ENCODE measurements at regions of chr1 and their contacts with region 1.

Region 1: DNA sequence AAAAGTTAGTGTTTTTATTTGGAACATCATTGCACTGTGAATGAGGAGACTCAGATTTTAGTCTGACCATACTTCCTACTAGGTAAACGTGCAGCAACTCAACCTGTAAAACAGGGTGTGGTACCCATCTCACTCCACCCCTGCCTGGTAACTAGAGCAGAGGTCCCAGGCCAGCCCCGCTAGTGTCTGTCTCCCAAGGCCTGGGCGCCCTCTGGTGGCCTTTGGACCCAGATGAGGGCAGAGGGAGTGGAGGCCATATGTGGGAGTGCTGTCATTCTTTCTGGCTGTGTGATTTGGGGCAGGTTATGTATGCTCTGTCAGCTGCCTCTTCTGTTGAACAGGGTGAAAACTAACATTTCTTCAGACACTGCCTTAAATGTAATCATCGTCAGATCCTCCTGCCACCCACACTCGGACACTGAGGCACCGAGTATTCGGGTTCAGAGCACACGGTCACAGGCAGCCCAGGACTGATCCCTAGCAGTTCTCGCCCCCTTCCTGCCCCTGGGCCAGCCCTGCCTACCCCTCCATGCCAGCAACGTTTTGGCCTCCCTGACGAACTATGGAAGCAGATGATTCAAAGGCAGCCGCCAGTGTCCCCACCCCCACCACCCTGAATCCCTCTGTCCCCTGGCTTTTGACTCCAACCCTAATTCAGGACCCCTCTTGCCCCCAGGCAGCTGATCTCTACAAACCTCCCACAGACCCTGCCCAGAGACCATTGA is 76.0 kb downstream of the CD247 start:
- DNase-seq: peak; percentile 92
- H3K4me3 ChIP-seq: no peak overlapping the region
- H3K27ac ChIP-seq: no peak overlapping the region
- H3K4me1 ChIP-seq: peaks cover 29% of the 10 kb centered on the region
- CTCF ChIP-seq: peak; percentile 96

Region 2: GRCh38 chr1:167066333-167067122 is 375.8 kb before region 1 on chr1:
- CTCF ChIA-PET with region 1: no interaction called
- POLR2A ChIA-PET with region 1: interaction called, 3 read pairs
- intact Hi-C with region 1: loop called (anchors 1 kb)
- DNase-seq: peak; percentile 73
- H3K4me3 ChIP-seq: peak overlapping the region; percentile 44
- H3K27ac ChIP-seq: no peak overlapping the region
- H3K4me1 ChIP-seq: no peaks in the 10 kb centered on the region
- CTCF ChIP-seq: peak; percentile 96

Region 3: GRCh38 chr1:167121375-167122120 is 320.7 kb before region 1 on chr1:
- CTCF ChIA-PET with region 1: no interaction called
- POLR2A ChIA-PET with region 1: no interaction called
- intact Hi-C with region 1: loop called (anchors 1 kb)
- DNase-seq: no peak
- H3K4me3 ChIP-seq: no peak overlapping the region
- H3K27ac ChIP-seq: no peak overlapping the region
- H3K4me1 ChIP-seq: no peaks in the 10 kb centered on the region
- CTCF ChIP-seq: no peak

Region 4: DNA sequence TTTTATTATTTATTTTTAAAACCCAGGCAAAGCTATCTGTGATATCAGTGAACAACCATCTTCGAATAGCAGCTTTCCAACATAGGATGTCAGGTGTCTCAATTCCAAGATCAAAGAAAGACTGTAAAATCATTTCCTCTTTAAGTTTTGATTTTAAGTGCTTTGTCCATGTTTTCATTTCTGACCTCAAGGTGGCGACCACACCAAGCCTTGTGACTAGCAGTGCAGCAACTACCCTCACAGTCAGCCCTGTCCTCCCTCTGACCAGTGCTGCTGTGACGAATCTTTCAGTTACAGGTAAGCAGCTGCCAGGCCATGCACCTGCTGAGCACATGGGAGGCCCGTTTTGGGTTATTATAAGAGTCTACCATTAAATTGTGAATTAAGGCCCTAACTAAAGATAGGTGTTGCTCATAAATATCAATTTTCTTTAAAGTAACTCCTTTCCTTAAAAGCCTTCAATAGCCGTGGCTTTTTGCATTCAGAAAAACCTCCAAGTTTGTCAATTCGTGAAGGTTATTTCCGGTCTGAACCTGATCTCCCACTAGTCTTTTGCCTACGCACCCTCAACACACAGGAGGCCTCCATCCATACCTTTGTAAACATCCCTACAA is 40.9 kb before region 1 on chr1:
- CTCF ChIA-PET with region 1: no interaction called
- POLR2A ChIA-PET with region 1: no interaction called
- intact Hi-C with region 1: loop called (anchors 1 kb)
- DNase-seq: peak; percentile 70
- H3K4me3 ChIP-seq: no peak overlapping the region
- H3K27ac ChIP-seq: no peak overlapping the region
- H3K4me1 ChIP-seq: peaks cover 11% of the 10 kb centered on the region
- CTCF ChIP-seq: peak; percentile 83

Region 5: DNA sequence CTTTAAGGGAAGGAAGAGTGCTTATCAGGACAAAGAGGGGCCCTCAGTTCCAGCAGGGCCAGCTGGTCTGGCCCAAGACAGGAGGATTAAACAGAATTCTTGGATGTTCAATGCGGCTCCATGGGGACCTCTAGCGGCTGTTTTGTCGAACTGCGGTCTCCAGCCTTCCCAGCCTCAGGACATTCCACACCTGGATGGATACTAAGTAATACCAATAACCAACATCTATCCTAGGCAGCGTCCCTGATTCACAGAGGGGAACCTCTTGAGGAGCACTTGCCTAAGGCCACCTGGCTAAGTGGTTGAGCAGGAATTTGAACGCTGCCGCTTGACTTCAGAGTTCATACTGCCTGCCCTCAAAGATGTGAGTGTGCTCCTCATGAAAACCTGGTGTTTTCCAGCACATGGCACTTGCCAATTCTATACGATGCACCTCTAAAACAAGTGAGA is 91.6 kb after region 1 on chr1:
- CTCF ChIA-PET with region 1: interaction called, 4 read pairs
- POLR2A ChIA-PET with region 1: interaction called, 4 read pairs
- intact Hi-C with region 1: loop called (anchors 1 kb)
- DNase-seq: peak; percentile 73
- H3K4me3 ChIP-seq: no peak overlapping the region
- H3K27ac ChIP-seq: no peak overlapping the region
- H3K4me1 ChIP-seq: peaks cover 6% of the 10 kb centered on the region
- CTCF ChIP-seq: peak; percentile 99

Region 6: GRCh38 chr1:167605576-167605975 is 163.3 kb after region 1 on chr1:
- CTCF ChIA-PET with region 1: no interaction called
- POLR2A ChIA-PET with region 1: no interaction called
- intact Hi-C with region 1: no loop called
- DNase-seq: no peak
- H3K4me3 ChIP-seq: no peak overlapping the region
- H3K27ac ChIP-seq: no peak overlapping the region
- H3K4me1 ChIP-seq: peaks cover 30% of the 10 kb centered on the region
- CTCF ChIP-seq: no peak